ENCODE measurements at regions of chr6 and their contacts with region 1.

Region 1: DNA sequence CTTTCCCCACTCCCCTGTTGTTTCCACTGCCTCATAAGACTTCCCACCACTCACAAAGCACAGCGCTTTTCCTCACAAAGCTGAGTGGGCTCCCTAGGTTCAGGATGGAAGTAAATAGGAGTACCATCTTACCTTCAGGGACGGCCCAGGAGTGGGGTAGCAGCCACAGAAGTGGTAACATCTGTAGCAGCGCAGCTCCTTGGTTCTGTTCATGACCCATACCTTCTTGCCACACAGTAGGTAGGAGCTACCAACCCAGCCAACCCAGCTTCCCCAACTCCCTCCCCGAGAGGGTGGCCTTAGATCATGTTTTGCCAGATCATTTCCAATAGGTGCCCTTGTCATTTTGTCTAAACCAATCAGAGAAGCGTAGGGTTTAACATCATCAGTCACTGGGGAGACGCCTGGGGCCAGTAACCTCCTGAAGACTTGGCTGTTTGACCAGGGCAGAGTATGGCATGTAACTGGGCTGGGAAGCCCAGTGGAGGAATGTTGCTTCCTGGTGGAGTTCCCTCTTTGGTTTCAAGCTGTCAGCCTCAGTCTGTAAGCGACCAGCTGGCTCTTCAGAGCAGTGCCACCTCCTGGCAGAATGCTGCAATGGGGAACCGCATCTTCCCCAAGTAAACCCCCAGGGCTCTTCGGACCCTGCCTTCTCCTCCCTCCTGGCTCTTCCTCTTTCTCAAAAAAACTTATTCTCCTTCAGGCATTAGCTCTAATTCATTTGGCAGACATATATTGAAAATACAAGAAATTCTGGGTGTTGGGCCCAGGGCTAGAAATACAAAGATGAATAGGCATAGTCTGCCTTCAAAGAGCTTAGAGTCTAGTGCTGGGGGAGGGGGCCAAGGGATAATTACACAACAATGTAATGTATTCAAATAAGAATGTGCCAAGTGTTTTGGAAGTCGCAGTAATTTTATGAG is at the start of gene HLA-DMA:
- DNase-seq: peak; percentile 94
- H3K4me3 ChIP-seq: no peak within 1 kb of the TSS
- H3K27ac ChIP-seq: no peak within 1 kb of the TSS
- H3K4me1 ChIP-seq: peaks cover 8% of the 10 kb centered on the region
- H3K27me3 ChIP-seq: no peaks in the 10 kb centered on the region
- CTCF ChIP-seq: peak; percentile 73 to 81
- total RNA-seq, gene HLA-DMA: 1.5 to 1.7 TPM

Region 2: DNA sequence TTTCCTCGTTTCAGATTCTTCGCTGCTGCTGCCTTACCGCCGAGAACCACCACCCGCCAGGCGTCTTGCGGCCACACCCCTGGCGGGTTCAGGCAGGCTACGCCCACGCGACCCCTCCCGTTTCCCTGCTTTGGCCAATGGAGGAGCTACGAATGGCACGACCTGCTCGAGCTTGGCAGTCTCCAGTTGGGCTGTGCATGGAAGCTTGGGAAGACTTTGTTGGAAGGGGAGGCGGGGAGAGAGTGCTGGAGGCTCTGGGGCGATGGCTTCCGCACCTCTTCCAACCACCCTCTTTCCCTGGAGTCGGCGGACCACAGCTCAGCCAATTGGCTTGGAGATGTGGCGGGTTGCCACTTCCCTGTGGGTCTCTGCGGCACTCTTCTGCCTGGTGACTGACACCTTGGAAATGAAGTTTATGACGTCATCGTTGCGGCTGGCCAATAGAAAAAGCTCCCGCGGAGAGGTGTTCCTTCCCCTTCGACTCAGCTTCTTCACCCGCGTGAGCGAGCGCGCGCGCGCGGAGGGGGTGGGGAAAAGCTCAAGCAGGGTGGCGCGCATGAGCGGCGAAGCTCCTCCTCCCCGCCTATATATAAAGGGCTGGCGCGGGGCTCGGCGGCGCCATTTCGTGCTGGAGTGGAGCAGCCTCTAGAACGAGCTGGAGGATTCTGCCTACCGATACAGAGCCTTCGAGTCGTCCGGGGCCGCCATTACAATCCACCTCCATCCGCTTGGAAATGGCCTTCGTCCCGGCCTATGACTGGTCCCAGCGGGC is 18.7 kb after region 1 on chr6:
- CTCF ChIA-PET with region 1: no interaction called
- dilution Hi-C with region 1: no loop called
- in situ Hi-C with region 1: no loop called
- intact Hi-C with region 1: loop called (anchors 1 kb)
- DNase-seq: peak; percentile 100
- H3K4me3 ChIP-seq: peak overlapping the region; percentile 83 to 90 (median 89)
- H3K27ac ChIP-seq: peak overlapping the region; percentile 99
- H3K4me1 ChIP-seq: peaks cover 24% of the 10 kb centered on the region
- H3K27me3 ChIP-seq: no peaks in the 10 kb centered on the region
- CTCF ChIP-seq: no peak